PC-3 (cell line): ENCODE measurements at regions of chr7 and their contacts with region 1.

Region 1: GRCh38 chr7:77536413-77537135 is 521 bp upstream of the PTPN12 start:
- DNase-seq: peak; percentile 96
- ATAC-seq: peak; percentile 83
- H3K4me3 ChIP-seq: peak overlapping the region; percentile 79
- H3K27ac ChIP-seq: peak overlapping the region; percentile 64
- H3K4me1 ChIP-seq: peaks cover 30% of the 10 kb centered on the region
- H3K27me3 ChIP-seq: no peaks in the 10 kb centered on the region
- CTCF ChIP-seq: no peak

Region 2: DNA sequence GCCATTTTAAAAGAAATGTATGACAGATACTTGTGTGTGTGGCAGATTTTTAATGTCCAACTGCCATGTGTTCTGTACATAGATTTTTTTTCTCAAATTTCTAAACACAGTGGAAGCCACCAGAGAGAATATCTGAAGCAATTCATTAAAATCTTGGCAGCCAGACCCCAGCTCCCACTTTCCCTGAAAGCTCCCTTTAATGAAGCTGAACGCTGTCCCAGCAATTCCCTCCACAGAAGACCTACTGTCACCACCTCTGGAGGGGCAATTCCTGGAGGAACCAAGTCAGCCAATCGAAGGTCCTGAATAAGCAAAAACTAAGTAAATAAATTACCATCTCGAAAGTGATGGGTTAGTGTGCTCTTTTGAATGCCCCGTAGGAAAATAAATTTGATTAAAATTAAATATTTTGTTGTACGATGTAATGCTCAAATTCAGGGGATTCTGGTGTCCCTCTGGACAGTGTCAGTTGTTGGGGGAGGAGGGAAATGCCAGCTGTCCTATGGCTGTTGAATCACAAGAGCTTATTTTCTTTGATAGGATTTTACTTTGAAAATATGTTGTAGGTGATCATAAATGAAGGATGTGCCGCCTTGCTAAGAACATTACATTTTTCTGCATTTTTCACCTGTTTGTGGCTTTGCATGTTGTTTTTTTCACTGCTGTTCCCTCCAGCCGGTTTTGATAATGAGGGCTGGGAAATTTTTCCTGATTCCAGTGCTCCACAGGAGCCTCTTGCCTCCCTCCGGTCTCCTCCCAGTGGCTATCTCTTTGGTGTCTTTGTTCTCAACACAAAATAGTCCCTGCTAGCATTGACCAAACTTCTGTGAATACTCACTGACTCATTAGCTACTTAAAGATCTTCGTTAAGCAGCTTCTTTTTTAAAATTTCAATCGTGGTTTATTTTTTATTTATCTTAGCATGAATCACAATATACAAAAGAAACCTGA is 111.2 kb before region 1 on chr7:
- CTCF ChIA-PET with region 1: interaction called, 3 read pairs
- POLR2A ChIA-PET with region 1: interaction called, 13 read pairs
- intact Hi-C with region 1: loop called (anchors 5 kb)
- DNase-seq: peak; percentile 91
- ATAC-seq: peak; percentile 93
- H3K4me3 ChIP-seq: peak overlapping the region; percentile 60
- H3K27ac ChIP-seq: peak overlapping the region; percentile 94
- H3K4me1 ChIP-seq: peaks cover 60% of the 10 kb centered on the region
- H3K27me3 ChIP-seq: no peaks in the 10 kb centered on the region
- CTCF ChIP-seq: no peak

Region 3: GRCh38 chr7:77455324-77455723 is 81.2 kb before region 1 on chr7:
- CTCF ChIA-PET with region 1: interaction called, 3 read pairs
- POLR2A ChIA-PET with region 1: interaction called, 9 read pairs
- intact Hi-C with region 1: loop called (anchors 1 kb)
- DNase-seq: peak; percentile 92
- ATAC-seq: peak; percentile 86
- H3K4me3 ChIP-seq: peak overlapping the region; percentile 47
- H3K27ac ChIP-seq: peak overlapping the region; percentile 89
- H3K4me1 ChIP-seq: peaks cover 68% of the 10 kb centered on the region
- H3K27me3 ChIP-seq: no peaks in the 10 kb centered on the region
- CTCF ChIP-seq: no peak

Region 4: DNA sequence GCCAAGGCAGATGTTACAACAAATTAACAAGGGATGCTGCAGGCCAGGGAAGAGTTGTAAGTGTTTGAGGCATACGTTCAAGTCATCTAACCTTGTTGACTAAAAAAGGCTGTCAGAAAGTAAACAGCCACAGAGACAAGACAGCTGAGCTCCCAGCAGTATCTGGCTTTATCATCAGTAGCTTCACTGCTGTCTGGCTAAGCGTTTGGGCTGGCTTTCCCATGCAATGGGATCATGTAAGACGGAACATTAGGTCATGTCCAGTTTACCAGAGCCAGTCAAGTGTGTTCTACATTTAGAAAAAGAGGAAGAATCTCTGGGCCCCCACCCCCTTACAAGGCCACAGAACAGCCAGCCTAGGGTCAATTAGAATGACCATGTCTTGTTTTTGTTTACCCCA is 69.2 kb before region 1 on chr7:
- CTCF ChIA-PET with region 1: no interaction called
- POLR2A ChIA-PET with region 1: no interaction called
- intact Hi-C with region 1: no loop called
- DNase-seq: no peak
- ATAC-seq: no peak
- H3K4me3 ChIP-seq: no peak overlapping the region
- H3K27ac ChIP-seq: no peak overlapping the region
- H3K4me1 ChIP-seq: peaks cover 8% of the 10 kb centered on the region; the same call in 1 of the 2 replicates
- H3K27me3 ChIP-seq: no peaks in the 10 kb centered on the region
- CTCF ChIP-seq: no peak

Region 5: GRCh38 chr7:77488986-77489385 is 47.6 kb before region 1 on chr7:
- CTCF ChIA-PET with region 1: no interaction called
- POLR2A ChIA-PET with region 1: no interaction called
- intact Hi-C with region 1: no loop called
- DNase-seq: no peak
- ATAC-seq: no peak
- H3K4me3 ChIP-seq: no peak overlapping the region
- H3K27ac ChIP-seq: no peak overlapping the region
- H3K4me1 ChIP-seq: no peaks in the 10 kb centered on the region
- H3K27me3 ChIP-seq: no peaks in the 10 kb centered on the region
- CTCF ChIP-seq: no peak

Region 6: DNA sequence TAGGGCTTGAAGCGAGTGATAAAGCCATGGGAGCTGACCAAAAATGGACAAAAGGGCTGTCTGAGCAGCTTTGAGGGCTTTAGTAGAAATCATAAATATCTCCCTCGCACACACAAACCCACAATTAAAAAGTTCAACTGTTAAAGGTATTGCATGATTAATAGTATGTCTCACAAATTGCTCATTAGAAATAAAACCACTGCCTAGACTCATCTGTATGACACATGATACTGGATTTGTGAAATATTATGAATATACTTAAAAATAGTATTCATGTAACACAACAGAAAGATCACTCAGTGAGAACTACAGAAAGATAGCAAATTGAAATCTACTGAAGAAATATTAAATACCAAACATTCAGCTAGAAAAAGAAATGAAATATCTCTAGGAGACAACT is 11.3 kb before region 1 on chr7:
- CTCF ChIA-PET with region 1: no interaction called
- POLR2A ChIA-PET with region 1: interaction called, 19 read pairs
- intact Hi-C with region 1: no loop called
- DNase-seq: peak; percentile 32
- ATAC-seq: peak; percentile 48
- H3K4me3 ChIP-seq: no peak overlapping the region
- H3K27ac ChIP-seq: 0 out of 2 replicates have a peak overlapping the region, but pooled peaks have one; percentile 6
- H3K4me1 ChIP-seq: peaks cover 20% of the 10 kb centered on the region
- H3K27me3 ChIP-seq: no peaks in the 10 kb centered on the region
- CTCF ChIP-seq: no peak

Region 7: DNA sequence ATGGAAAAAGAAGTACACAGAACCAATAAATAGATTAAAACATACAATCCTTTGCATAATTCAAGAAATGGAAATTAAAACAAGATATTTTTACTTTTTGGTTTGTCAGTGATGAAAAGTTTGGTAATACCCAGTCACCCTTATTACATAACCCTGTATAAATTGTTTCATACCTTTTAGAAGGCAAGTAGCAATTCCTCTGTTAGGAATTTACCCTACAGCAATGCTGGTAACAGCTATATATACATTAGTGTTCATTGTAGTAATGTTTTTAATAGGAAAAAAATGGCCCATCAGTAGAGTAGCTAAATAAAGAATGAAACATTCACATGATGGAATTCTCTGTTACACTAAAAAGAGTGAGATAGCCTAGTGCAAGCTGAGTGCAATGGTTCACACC is 43.2 kb after region 1 on chr7:
- CTCF ChIA-PET with region 1: no interaction called
- POLR2A ChIA-PET with region 1: interaction called, 10 read pairs
- intact Hi-C with region 1: no loop called
- DNase-seq: no peak
- ATAC-seq: no peak; the same call in 1 of the 2 replicates
- H3K4me3 ChIP-seq: no peak overlapping the region
- H3K27ac ChIP-seq: no peak overlapping the region
- H3K4me1 ChIP-seq: no peaks in the 10 kb centered on the region; the same call in 1 of the 2 replicates
- H3K27me3 ChIP-seq: no peaks in the 10 kb centered on the region
- CTCF ChIP-seq: no peak

Region 8: GRCh38 chr7:77667459-77668086 is 131.0 kb after region 1 on chr7:
- CTCF ChIA-PET with region 1: no interaction called
- POLR2A ChIA-PET with region 1: no interaction called
- intact Hi-C with region 1: no loop called
- DNase-seq: peak; percentile 14
- ATAC-seq: peak; percentile 84
- H3K4me3 ChIP-seq: no peak overlapping the region
- H3K27ac ChIP-seq: no peak overlapping the region
- H3K4me1 ChIP-seq: peaks cover 7% of the 10 kb centered on the region; the same call in 1 of the 2 replicates
- H3K27me3 ChIP-seq: no peaks in the 10 kb centered on the region
- CTCF ChIP-seq: no peak

Region 9: GRCh38 chr7:77894574-77895091 is 358.1 kb after region 1 on chr7:
- CTCF ChIA-PET with region 1: no interaction called
- POLR2A ChIA-PET with region 1: no interaction called
- intact Hi-C with region 1: no loop called
- DNase-seq: no peak
- ATAC-seq: no peak
- H3K4me3 ChIP-seq: no peak overlapping the region
- H3K27ac ChIP-seq: no peak overlapping the region
- H3K4me1 ChIP-seq: no peaks in the 10 kb centered on the region
- H3K27me3 ChIP-seq: no peaks in the 10 kb centered on the region
- CTCF ChIP-seq: no peak